Activated CD4-positive, alpha-beta memory T cell treated with anti-CD3 and anti-CD28 coated beads for 36 hours (primary cell): ENCODE measurements at regions of chr6 and their contacts with region 1.

Region 1: GRCh38 chr6:36759148-36759759 is 61.6 kb downstream of the RAB44 start:
- DNase-seq: peak; percentile 89
- H3K4me3 Mint-ChIP-seq: no peak overlapping the region
- H3K27ac Mint-ChIP-seq: peak overlapping the region; percentile 11
- H3K4me1 Mint-ChIP-seq: peaks cover 40% of the 10 kb centered on the region
- H3K27me3 Mint-ChIP-seq: no peaks in the 10 kb centered on the region

Region 2: DNA sequence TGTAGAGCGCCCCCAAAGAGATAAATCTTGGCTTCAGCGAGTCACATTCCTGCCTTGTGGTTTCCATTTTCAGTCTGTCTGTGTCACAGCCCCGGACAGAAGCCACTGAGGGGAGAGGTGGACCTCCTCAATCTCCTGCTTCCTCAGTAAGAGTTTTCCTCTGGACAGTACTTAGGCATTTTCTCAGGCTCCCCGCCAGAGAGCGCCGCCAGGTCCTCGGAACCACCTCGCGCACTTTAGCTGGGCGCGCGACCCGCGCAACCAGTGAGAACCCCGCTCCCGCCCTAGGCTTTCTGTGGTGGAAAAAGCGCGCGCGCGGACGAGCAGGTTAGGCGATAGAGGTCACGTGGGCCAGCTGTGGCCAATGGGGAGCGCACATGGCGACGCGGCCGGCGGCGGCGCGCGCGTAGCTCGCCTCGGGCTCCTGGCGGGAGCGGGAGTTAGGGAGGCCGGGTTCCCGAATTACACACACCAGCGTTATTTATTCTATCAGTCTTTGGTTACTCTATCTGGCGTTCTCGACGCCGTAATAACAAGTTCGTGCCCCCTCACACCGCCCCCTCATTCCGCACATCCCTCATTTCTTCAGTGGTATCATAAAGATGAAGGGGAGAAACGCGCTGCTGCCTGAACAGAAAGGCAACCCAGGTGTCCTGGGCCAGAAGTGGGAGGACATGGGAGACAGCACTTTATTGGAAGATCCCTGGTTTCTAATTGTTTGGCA is 336.0 kb before region 1 on chr6:
- CTCF ChIA-PET with region 1: interaction called, 11 read pairs
- POLR2A ChIA-PET with region 1: interaction called, 4 read pairs
- intact Hi-C with region 1: loop called (anchors 1 kb)
- DNase-seq: peak; percentile 99
- H3K4me3 Mint-ChIP-seq: peak overlapping the region; percentile 80
- H3K27ac Mint-ChIP-seq: peak overlapping the region; percentile 84
- H3K4me1 Mint-ChIP-seq: peaks cover 17% of the 10 kb centered on the region
- H3K27me3 Mint-ChIP-seq: no peaks in the 10 kb centered on the region

Region 3: DNA sequence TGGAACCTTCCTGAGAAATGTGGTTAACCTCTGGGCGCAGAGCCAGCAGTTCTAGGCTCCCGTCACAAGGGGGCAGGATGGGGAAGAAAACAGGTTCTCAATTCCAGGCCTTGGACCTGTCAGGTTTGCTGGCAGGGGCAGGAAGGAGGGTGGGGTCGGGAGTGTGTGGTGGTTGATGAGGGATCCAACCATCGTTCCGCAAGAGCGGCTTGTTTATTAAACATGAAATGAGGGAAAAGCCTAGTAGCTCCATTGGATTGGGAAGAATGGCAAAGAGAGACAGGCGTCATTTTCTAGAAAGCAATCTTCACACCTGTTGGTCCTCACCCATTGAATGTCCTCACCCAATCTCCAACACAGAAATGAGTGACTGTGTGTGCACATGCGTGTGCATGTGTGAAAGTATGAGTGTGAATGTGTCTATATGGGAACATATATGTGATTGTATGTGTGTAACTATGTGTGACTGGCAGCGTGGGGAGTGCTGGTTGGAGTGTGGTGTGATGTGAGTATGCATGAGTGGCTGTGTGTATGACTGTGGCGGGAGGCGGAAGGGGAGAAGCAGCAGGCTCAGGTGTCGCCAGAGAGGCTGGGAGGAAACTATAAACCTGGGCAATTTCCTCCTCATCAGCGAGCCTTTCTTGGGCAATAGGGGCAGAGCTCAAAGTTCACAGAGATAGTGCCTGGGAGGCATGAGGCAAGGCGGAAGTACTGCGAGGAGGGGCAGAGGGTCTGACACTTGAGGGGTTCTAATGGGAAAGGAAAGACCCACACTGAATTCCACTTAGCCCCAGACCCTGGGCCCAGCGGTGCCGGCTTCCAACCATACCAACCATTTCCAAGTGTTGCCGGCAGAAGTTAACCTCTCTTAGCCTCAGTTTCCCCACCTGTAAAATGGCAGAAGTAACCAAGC is 135.5 kb before region 1 on chr6:
- CTCF ChIA-PET with region 1: interaction called, 96 read pairs
- POLR2A ChIA-PET with region 1: no interaction called
- intact Hi-C with region 1: loop called (anchors 1 kb)
- DNase-seq: peak; percentile 87
- H3K4me3 Mint-ChIP-seq: no peak overlapping the region
- H3K27ac Mint-ChIP-seq: no peak overlapping the region
- H3K4me1 Mint-ChIP-seq: peaks cover 14% of the 10 kb centered on the region
- H3K27me3 Mint-ChIP-seq: no peaks in the 10 kb centered on the region

Region 4: DNA sequence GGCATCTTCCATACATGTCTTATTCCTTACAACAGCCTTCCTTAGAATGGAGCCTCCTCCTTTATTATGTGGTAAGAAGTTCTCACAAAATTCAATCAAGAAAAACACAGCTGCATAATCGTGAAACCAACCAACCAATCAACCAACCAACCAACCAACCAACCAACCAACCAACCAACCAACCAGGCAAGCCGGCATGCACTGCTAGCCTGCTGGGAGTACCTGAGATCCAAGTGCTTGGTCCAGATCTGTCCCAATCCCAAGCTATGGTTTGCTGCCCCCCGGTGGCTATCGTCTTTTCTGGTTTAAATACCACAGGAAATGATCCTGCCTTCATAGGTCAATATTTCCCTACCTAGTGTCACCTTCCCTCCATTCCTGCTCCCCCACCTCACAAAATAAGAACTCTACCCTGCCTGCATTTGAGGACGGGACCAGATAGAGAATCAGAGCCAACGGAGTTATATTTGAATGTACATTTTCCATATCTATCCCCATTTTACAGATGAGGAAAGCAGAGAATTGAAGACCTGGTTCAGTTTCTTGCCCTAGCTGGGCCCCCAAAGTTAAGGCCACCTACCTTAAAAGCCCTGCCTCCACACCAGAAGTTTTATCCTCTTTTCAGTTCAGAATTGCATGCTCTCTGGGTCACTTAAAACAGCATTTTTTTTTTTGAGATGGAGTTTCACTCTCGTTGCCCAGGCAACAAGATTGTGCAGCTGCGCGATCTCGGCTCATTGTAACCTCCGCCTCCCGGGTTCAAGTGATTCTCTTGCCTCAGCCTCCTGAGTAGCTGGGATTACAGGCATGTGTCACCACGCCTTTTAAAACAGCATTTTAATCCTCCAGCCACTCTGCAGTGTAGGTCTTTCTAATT is 34.5 kb before region 1 on chr6:
- CTCF ChIA-PET with region 1: interaction called, 13 read pairs
- POLR2A ChIA-PET with region 1: no interaction called
- intact Hi-C with region 1: loop called (anchors 2 kb)
- DNase-seq: peak; percentile 79
- H3K4me3 Mint-ChIP-seq: no peak overlapping the region
- H3K27ac Mint-ChIP-seq: no peak overlapping the region
- H3K4me1 Mint-ChIP-seq: peaks cover 20% of the 10 kb centered on the region
- H3K27me3 Mint-ChIP-seq: no peaks in the 10 kb centered on the region

Region 5: GRCh38 chr6:36827261-36828079 is 68.2 kb after region 1 on chr6:
- CTCF ChIA-PET with region 1: no interaction called
- POLR2A ChIA-PET with region 1: no interaction called
- intact Hi-C with region 1: no loop called
- DNase-seq: peak; percentile 48
- H3K4me3 Mint-ChIP-seq: no peak overlapping the region
- H3K27ac Mint-ChIP-seq: no peak overlapping the region
- H3K4me1 Mint-ChIP-seq: peaks cover 3% of the 10 kb centered on the region
- H3K27me3 Mint-ChIP-seq: peaks cover 10% of the 10 kb centered on the region

Region 6: GRCh38 chr6:36851149-36851614 is 91.9 kb after region 1 on chr6:
- CTCF ChIA-PET with region 1: interaction called, 11 read pairs
- POLR2A ChIA-PET with region 1: no interaction called
- intact Hi-C with region 1: loop called (anchors 1 kb)
- DNase-seq: peak; percentile 34
- H3K4me3 Mint-ChIP-seq: no peak overlapping the region
- H3K27ac Mint-ChIP-seq: no peak overlapping the region
- H3K4me1 Mint-ChIP-seq: no peaks in the 10 kb centered on the region
- H3K27me3 Mint-ChIP-seq: no peaks in the 10 kb centered on the region

Region 7: GRCh38 chr6:37207903-37208456 is 448.7 kb after region 1 on chr6:
- CTCF ChIA-PET with region 1: interaction called, 4 read pairs
- POLR2A ChIA-PET with region 1: no interaction called
- intact Hi-C with region 1: loop called (anchors 10 kb)
- DNase-seq: peak; percentile 95
- H3K4me3 Mint-ChIP-seq: no peak overlapping the region
- H3K27ac Mint-ChIP-seq: peak overlapping the region; percentile 69
- H3K4me1 Mint-ChIP-seq: peaks cover 63% of the 10 kb centered on the region
- H3K27me3 Mint-ChIP-seq: no peaks in the 10 kb centered on the region